Activated naive CD4-positive, alpha-beta T cell treated with anti-CD3 and anti-CD28 coated beads for 36 hours (primary cell): ENCODE measurements at regions of chr22 and their contacts with region 1.

Region 1: GRCh38 chr22:50148991-50149721 is 21.4 kb upstream of the PANX2 start:
- DNase-seq: peak; percentile 76
- H3K4me3 Mint-ChIP-seq: no peak overlapping the region
- H3K27ac Mint-ChIP-seq: no peak overlapping the region
- H3K4me1 Mint-ChIP-seq: no peaks in the 10 kb centered on the region
- H3K27me3 Mint-ChIP-seq: no peaks in the 10 kb centered on the region

Region 2: GRCh38 chr22:49992921-49993648 is 156.1 kb before region 1 on chr22:
- CTCF ChIA-PET with region 1: no interaction called
- intact Hi-C with region 1: no loop called
- DNase-seq: peak; percentile 85
- H3K4me3 Mint-ChIP-seq: no peak overlapping the region
- H3K27ac Mint-ChIP-seq: peak overlapping the region; percentile 19
- H3K4me1 Mint-ChIP-seq: peaks cover 4% of the 10 kb centered on the region
- H3K27me3 Mint-ChIP-seq: no peaks in the 10 kb centered on the region

Region 3: GRCh38 chr22:50074551-50075530 is 74.3 kb before region 1 on chr22:
- CTCF ChIA-PET with region 1: no interaction called
- intact Hi-C with region 1: no loop called
- DNase-seq: no peak
- H3K4me3 Mint-ChIP-seq: no peak overlapping the region
- H3K27ac Mint-ChIP-seq: no peak overlapping the region
- H3K4me1 Mint-ChIP-seq: no peaks in the 10 kb centered on the region
- H3K27me3 Mint-ChIP-seq: no peaks in the 10 kb centered on the region

Region 4: GRCh38 chr22:50173311-50173982 is 24.3 kb after region 1 on chr22:
- CTCF ChIA-PET with region 1: no interaction called
- intact Hi-C with region 1: no loop called
- DNase-seq: no peak
- H3K4me3 Mint-ChIP-seq: no peak overlapping the region
- H3K27ac Mint-ChIP-seq: no peak overlapping the region
- H3K4me1 Mint-ChIP-seq: peaks cover 2% of the 10 kb centered on the region
- H3K27me3 Mint-ChIP-seq: peaks cover 23% of the 10 kb centered on the region

Region 5: DNA sequence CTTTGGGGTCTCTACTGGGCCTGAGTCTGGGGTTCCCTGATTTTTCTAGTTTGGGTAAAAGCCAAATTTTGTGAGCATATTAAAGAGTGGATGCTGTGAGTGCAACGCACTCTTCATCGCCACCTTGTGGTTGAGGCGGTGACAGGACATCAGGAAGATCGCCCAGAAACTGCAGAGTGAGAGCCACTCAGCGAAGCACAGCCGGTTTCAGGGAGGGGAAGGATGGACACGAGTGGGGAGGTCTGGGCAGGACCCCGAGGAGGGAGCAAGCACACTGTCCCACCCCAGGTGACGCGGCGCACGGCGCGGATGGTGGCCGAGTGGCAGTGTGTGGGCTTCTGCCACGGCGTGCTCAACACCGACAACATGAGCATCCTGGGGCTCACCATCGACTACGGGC is 60.7 kb after region 1 on chr22:
- CTCF ChIA-PET with region 1: interaction called, 19 read pairs
- intact Hi-C with region 1: loop called (anchors 1 kb)
- DNase-seq: peak; percentile 83
- H3K4me3 Mint-ChIP-seq: no peak overlapping the region
- H3K27ac Mint-ChIP-seq: peak overlapping the region; percentile 78
- H3K4me1 Mint-ChIP-seq: peaks cover 13% of the 10 kb centered on the region
- H3K27me3 Mint-ChIP-seq: no peaks in the 10 kb centered on the region